AG04450 (cell line): ENCODE measurements at regions of chr3 and their contacts with region 1.

Region 1: GRCh38 chr3:8301728-8302462 is 199.7 kb upstream of the LMCD1 start:
- DNase-seq: peak; percentile 20
- H3K4me3 ChIP-seq: no peak overlapping the region
- H3K27ac ChIP-seq: no peak overlapping the region
- H3K27me3 ChIP-seq: peaks cover 2% of the 10 kb centered on the region
- CTCF ChIP-seq: peak; percentile 76

Region 2: GRCh38 chr3:8282541-8283165 is 19.2 kb before region 1 on chr3:
- CTCF ChIA-PET with region 1: interaction called, 13 read pairs
- POLR2A ChIA-PET with region 1: no interaction called
- DNase-seq: no peak
- H3K4me3 ChIP-seq: no peak overlapping the region
- H3K27ac ChIP-seq: no peak overlapping the region
- H3K27me3 ChIP-seq: no peaks in the 10 kb centered on the region
- CTCF ChIP-seq: no peak

Region 3: DNA sequence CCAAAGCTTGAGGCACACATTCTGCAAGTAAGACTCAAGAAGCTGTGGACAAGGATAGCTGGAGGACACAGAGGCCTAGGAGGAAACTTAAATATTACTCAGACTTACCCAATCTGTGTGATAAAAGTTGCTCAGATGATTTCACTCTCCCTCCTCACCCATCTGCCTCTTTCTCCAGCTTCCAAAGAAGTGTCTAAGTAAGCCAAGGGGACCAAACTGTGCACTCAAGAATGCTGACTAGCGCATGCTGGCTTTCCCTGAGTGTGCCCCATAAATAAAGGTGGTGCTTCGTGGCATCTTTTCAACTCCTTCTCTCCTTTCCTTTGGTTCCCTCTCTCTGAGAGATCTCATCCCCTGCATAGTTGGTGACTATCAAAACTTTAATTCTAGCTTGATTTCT is 11.3 kb before region 1 on chr3:
- CTCF ChIA-PET with region 1: interaction called, 18 read pairs
- POLR2A ChIA-PET with region 1: no interaction called
- DNase-seq: no peak
- H3K4me3 ChIP-seq: no peak overlapping the region
- H3K27ac ChIP-seq: no peak overlapping the region
- H3K27me3 ChIP-seq: no peaks in the 10 kb centered on the region
- CTCF ChIP-seq: no peak

Region 4: GRCh38 chr3:8324740-8325139 is 22.8 kb after region 1 on chr3:
- CTCF ChIA-PET with region 1: interaction called, 30 read pairs
- POLR2A ChIA-PET with region 1: no interaction called
- DNase-seq: no peak
- H3K4me3 ChIP-seq: no peak overlapping the region
- H3K27ac ChIP-seq: no peak overlapping the region
- H3K27me3 ChIP-seq: no peaks in the 10 kb centered on the region
- CTCF ChIP-seq: peak; percentile 62